CD14-positive monocyte (primary cell): ENCODE measurements at regions of chr14 and their contacts with region 1.

Region 1: GRCh38 chr14:94180655-94181271 is 6.6 kb downstream of the PPP4R4 start:
- DNase-seq: peak; percentile 32 to 47 (median 44)
- H3K4me3 ChIP-seq: peak overlapping the region; percentile 16 to 43 (median 26)
- H3K4me3 Mint-ChIP-seq: peak overlapping the region; percentile 0 to 70
- H3K27ac ChIP-seq: no peak overlapping the region
- H3K27ac Mint-ChIP-seq: peak overlapping the region in 1 of 7 donors; percentile 2
- H3K4me1 ChIP-seq: peaks cover 2 to 6% of the 10 kb centered on the region in 2 donors
- H3K4me1 Mint-ChIP-seq: peaks cover 4% of the 10 kb centered on the region
- H3K27me3 ChIP-seq: peaks cover 39 to 58% of the 10 kb centered on the region in 2 donors
- H3K27me3 Mint-ChIP-seq: peaks cover 30 to 46% (median 31%) of the 10 kb centered on the region in 3 donors
- CTCF ChIP-seq: peak; percentile 78

Region 2: GRCh38 chr14:94036313-94037050 is 144.3 kb before region 1 on chr14:
- intact Hi-C with region 1: loop called (anchors 5 to 10 kb)
- DNase-seq: peak; percentile 50 to 59 (median 53)
- H3K4me3 ChIP-seq: no peak overlapping the region
- H3K4me3 Mint-ChIP-seq: no peak overlapping the region
- H3K27ac ChIP-seq: no peak overlapping the region
- H3K27ac Mint-ChIP-seq: peak overlapping the region in 1 of 7 donors; percentile 42
- H3K4me1 ChIP-seq: no peaks in the 10 kb centered on the region
- H3K4me1 Mint-ChIP-seq: no peaks in the 10 kb centered on the region
- H3K27me3 ChIP-seq: no peaks in the 10 kb centered on the region
- H3K27me3 Mint-ChIP-seq: peaks cover 0 to 2% (median under 1%) of the 10 kb centered on the region in 3 donors
- CTCF ChIP-seq: peak; percentile 87

Region 3: DNA sequence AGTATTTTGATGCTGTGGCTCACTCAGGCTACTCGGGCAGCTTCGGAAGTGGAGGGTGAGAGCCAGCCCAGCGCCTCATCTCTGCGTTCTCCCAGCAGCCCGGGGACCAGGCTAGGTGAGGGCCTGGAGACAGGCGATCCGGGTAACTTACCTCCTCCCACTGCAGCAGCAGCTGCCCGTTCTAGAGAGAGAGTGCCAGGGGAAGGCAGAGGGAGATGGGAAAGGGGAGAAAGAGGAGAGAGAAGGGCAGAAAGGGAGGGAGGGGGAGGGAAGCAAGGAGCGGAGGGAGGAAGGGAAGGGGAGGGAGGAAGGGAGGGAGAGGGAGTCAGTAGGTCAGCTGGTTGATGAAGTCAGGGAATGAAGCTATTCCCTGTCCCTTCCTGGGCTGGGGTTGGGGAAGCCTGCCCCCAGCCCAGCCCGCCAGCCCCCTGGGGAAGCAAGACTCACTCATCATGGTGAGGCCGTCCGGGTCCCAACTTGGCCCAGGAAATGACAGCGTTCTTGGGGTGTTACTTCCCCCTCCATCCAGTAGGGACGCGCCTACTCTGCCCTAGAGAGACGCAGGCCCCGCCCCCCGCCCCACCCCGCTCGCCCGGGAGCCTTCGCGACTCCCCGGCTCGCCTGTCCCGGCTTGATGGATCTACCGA is 51.5 kb before region 1 on chr14 and contains the start of gene IFI27L2:
- intact Hi-C with region 1: loop called (anchors 2 to 5 kb)
- DNase-seq: peak; percentile 71 to 77 (median 77)
- H3K4me3 ChIP-seq: peak within 1 kb of the TSS; percentile 50 to 79 (median 78)
- H3K4me3 Mint-ChIP-seq: peak within 1 kb of the TSS; percentile 86 to 94
- H3K27ac ChIP-seq: peak within 1 kb of the TSS in 1 of 2 donors; percentile 74
- H3K27ac Mint-ChIP-seq: peak within 1 kb of the TSS; percentile 68 to 93 (median 82)
- H3K4me1 ChIP-seq: peaks cover 13 to 24% of the 10 kb centered on the region in 2 donors
- H3K4me1 Mint-ChIP-seq: peaks cover 16% of the 10 kb centered on the region
- H3K27me3 ChIP-seq: peaks cover 0 to 8% of the 10 kb centered on the region in 2 donors
- H3K27me3 Mint-ChIP-seq: peaks cover 6 to 13% (median 12%) of the 10 kb centered on the region in 3 donors
- CTCF ChIP-seq: peak; percentile 18
- polyA plus RNA-seq, gene IFI27L2: 55.4 to 156 (median 96.1) TPM

Region 4: DNA sequence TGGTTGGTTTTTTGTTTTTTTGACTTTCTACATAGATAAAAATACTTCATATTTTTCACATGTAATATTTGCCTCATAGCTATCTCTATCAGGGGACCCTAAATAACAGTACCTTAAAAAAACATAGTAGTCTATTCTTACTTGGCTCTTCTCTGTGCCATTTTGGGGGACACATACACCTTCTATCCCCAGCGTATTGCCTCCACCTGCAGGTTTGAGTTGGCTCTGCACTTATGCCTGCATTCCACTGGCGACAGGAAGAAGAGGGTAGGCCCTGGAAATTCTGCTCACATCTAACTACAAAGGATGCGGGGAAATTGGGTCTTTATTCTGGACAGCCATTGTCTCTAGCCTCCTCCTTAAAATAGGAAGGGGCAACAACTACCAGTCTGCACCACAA is 37.5 kb before region 1 on chr14:
- intact Hi-C with region 1: no loop called
- DNase-seq: no peak
- H3K4me3 ChIP-seq: no peak overlapping the region
- H3K4me3 Mint-ChIP-seq: no peak overlapping the region
- H3K27ac ChIP-seq: no peak overlapping the region
- H3K27ac Mint-ChIP-seq: no peak overlapping the region
- H3K4me1 ChIP-seq: peaks cover 8% of the 10 kb centered on the region in 2 donors
- H3K4me1 Mint-ChIP-seq: peaks cover 13% of the 10 kb centered on the region
- H3K27me3 ChIP-seq: no peaks in the 10 kb centered on the region
- H3K27me3 Mint-ChIP-seq: peaks cover 0 to 6% (median 0%) of the 10 kb centered on the region in 3 donors
- CTCF ChIP-seq: no peak

Region 5: GRCh38 chr14:94322648-94323570 is 142.1 kb after region 1 on chr14 and contains the start of gene SERPINA6:
- intact Hi-C with region 1: no loop called
- DNase-seq: no peak
- H3K4me3 ChIP-seq: no peak within 1 kb of the TSS
- H3K4me3 Mint-ChIP-seq: no peak within 1 kb of the TSS
- H3K27ac ChIP-seq: no peak within 1 kb of the TSS
- H3K27ac Mint-ChIP-seq: no peak within 1 kb of the TSS
- H3K4me1 ChIP-seq: no peaks in the 10 kb centered on the region
- H3K4me1 Mint-ChIP-seq: no peaks in the 10 kb centered on the region
- H3K27me3 ChIP-seq: peaks cover 0 to 8% of the 10 kb centered on the region in 2 donors
- H3K27me3 Mint-ChIP-seq: peaks cover 10 to 19% (median 11%) of the 10 kb centered on the region in 3 donors
- CTCF ChIP-seq: no peak
- polyA plus RNA-seq, gene SERPINA6: not detected

Region 6: GRCh38 chr14:94355191-94355797 is 174.5 kb after region 1 on chr14:
- intact Hi-C with region 1: no loop called
- DNase-seq: peak; percentile 51 to 71 (median 51)
- H3K4me3 ChIP-seq: no peak overlapping the region
- H3K4me3 Mint-ChIP-seq: peak overlapping the region in 1 of 2 donors; percentile 14
- H3K27ac ChIP-seq: no peak overlapping the region
- H3K27ac Mint-ChIP-seq: peak overlapping the region in 1 of 7 donors; percentile 5
- H3K4me1 ChIP-seq: peaks cover 0 to 2% of the 10 kb centered on the region in 2 donors
- H3K4me1 Mint-ChIP-seq: peaks cover 8% of the 10 kb centered on the region
- H3K27me3 ChIP-seq: peaks cover 21 to 23% of the 10 kb centered on the region in 2 donors
- H3K27me3 Mint-ChIP-seq: peaks cover 15 to 32% (median 19%) of the 10 kb centered on the region in 3 donors
- CTCF ChIP-seq: peak; percentile 80

Region 7: DNA sequence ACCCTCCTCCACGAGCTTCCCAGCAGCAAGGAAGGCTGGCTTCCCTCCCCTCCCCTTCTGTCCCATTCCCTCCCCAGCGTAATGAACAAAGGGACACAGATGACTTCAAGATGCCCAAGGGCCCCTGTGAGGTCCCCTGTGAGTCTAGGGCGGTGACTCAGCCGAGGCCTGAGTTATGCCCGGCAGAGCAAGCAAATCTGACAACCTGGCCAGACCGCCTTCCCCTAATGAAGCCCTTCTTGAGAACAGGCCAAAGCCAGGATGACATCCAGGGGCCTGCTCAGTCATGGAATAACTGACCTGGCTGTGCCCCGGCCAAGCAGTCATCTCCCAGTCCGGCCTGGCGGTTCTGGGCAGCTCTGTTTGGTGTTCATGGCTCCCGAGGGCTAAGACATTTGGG is 887.3 kb after region 1 on chr14:
- intact Hi-C with region 1: no loop called
- DNase-seq: no peak
- H3K4me3 ChIP-seq: no peak overlapping the region
- H3K4me3 Mint-ChIP-seq: no peak overlapping the region
- H3K27ac ChIP-seq: no peak overlapping the region
- H3K27ac Mint-ChIP-seq: no peak overlapping the region
- H3K4me1 ChIP-seq: no peaks in the 10 kb centered on the region
- H3K4me1 Mint-ChIP-seq: no peaks in the 10 kb centered on the region
- H3K27me3 ChIP-seq: no peaks in the 10 kb centered on the region
- H3K27me3 Mint-ChIP-seq: peaks cover 2 to 20% (median 9%) of the 10 kb centered on the region in 3 donors
- CTCF ChIP-seq: no peak